ENCODE measurements at regions of chr13 and their contacts with region 1.

Region 1: DNA sequence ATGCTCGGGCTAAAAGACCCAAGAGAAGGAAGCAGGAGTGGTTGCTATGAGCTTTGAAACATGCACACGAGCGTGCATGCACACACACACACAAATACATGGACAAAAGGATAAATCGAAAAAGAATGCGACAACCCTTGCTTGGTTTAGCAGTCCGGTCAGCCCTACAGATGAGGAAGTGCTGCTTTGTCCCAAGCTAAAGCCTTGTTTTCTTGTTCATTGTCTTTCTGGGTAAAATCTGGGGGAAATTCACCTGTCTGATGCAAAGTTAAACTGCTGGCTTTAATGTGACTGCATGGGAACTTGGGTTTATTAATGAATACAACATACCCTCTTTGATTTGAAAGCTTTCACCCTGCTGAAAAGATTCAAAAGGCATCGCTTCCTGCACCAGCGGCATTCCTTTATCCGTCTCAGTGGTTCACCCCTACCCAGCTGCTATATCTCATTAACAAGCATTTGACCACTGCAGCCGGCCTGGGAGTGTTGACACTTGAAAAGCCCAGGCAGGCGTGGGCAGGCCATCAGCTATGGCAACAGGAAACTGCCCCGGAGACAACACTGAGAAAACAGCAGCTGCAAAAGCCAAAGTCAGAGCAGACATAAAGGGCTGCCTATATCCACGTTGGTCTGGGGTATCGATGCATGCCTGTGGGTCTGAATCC is 301.7 kb downstream of the NDFIP2 start:
- DNase-seq: no peak
- ATAC-seq: peak; percentile 88
- H3K4me3 ChIP-seq: no peak overlapping the region
- H3K27ac ChIP-seq: no peak overlapping the region
- H3K4me1 ChIP-seq: no peaks in the 10 kb centered on the region
- H3K27me3 ChIP-seq: no peaks in the 10 kb centered on the region
- CTCF ChIP-seq: no peak
- EP300 ChIP-seq: peak in 1 of 2 experiments; percentile 62; a peak in 1 of 4 replicates
- POLR2A ChIP-seq: no peak
- RAD21 ChIP-seq: no peak

Region 2: GRCh38 chr13:79796136-79796535 is 13.5 kb after region 1 on chr13:
- CTCF ChIA-PET with region 1: interaction called, 5 read pairs
- POLR2A ChIA-PET with region 1: no interaction called
- RAD21 ChIA-PET with region 1: no interaction called
- SMC1A ChIA-PET with region 1: interaction called, 20 read pairs
- in situ Hi-C with region 1: no loop called
- intact Hi-C with region 1: no loop called
- DNase-seq: no peak
- ATAC-seq: no peak
- H3K4me3 ChIP-seq: no peak overlapping the region
- H3K27ac ChIP-seq: no peak overlapping the region
- H3K4me1 ChIP-seq: no peaks in the 10 kb centered on the region
- H3K27me3 ChIP-seq: no peaks in the 10 kb centered on the region
- CTCF ChIP-seq: no peak
- EP300 ChIP-seq: no peak
- POLR2A ChIP-seq: no peak
- RAD21 ChIP-seq: no peak

Region 3: GRCh38 chr13:79803989-79804388 is 21.3 kb after region 1 on chr13:
- CTCF ChIA-PET with region 1: interaction called, 4 read pairs
- POLR2A ChIA-PET with region 1: no interaction called
- RAD21 ChIA-PET with region 1: interaction called, 4 read pairs
- SMC1A ChIA-PET with region 1: interaction called, 20 read pairs
- in situ Hi-C with region 1: no loop called
- intact Hi-C with region 1: no loop called
- DNase-seq: no peak
- ATAC-seq: peak; percentile 79
- H3K4me3 ChIP-seq: no peak overlapping the region
- H3K27ac ChIP-seq: no peak overlapping the region
- H3K4me1 ChIP-seq: no peaks in the 10 kb centered on the region
- H3K27me3 ChIP-seq: no peaks in the 10 kb centered on the region
- CTCF ChIP-seq: no peak
- EP300 ChIP-seq: peak in 1 of 2 experiments; percentile 31; a peak in 1 of 4 replicates
- POLR2A ChIP-seq: no peak
- RAD21 ChIP-seq: no peak

Region 4: GRCh38 chr13:79851318-79851717 is 68.6 kb after region 1 on chr13:
- CTCF ChIA-PET with region 1: no interaction called
- POLR2A ChIA-PET with region 1: no interaction called
- RAD21 ChIA-PET with region 1: no interaction called
- SMC1A ChIA-PET with region 1: no interaction called
- in situ Hi-C with region 1: no loop called
- intact Hi-C with region 1: no loop called
- DNase-seq: no peak
- ATAC-seq: no peak
- H3K4me3 ChIP-seq: no peak overlapping the region
- H3K27ac ChIP-seq: no peak overlapping the region
- H3K4me1 ChIP-seq: no peaks in the 10 kb centered on the region
- H3K27me3 ChIP-seq: no peaks in the 10 kb centered on the region
- CTCF ChIP-seq: no peak
- EP300 ChIP-seq: no peak
- POLR2A ChIP-seq: no peak
- RAD21 ChIP-seq: no peak